Astrocyte of the cerebellum (primary cell): ENCODE measurements at regions of chr17 and their contacts with region 1.

Region 1: DNA sequence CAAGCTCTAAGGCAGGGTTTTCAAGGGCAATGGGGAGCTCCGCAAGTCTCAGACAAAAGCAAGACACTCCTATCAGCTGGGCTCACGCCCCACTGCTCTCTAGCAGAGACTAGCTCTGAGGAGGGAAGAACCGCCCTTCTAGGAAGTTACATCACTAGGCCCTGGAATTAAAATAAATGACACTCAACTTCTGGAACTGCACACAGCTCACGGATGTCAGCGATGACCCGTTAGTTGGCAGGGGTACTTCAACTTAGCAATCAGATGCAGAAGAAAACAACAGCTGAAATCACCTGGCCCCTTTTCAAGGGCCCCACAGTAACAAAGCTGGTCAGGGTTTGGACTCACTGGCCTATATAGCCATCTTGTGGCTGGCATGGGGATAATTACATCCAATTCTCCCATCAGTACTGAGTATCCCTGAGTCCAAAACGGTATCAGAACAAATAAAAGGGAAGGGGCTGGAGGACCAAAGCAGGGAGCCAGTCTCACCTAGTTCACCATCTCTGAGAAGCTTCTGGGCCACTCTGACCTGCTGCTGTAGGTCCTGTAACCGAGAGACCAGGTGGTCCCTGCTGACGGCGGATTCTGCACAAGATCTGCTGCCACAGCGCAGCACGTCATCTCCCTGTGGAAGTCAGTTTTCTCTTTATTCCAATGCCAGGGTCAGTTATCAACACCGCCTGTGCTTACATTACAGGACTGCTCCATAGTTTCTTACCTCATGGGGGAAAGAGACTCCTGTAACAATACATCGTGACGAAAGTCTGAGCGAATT is 22.2 kb downstream of the SERPINF1 start:
- DNase-seq: peak; percentile 84
- H3K4me3 ChIP-seq: no peak overlapping the region
- CTCF ChIP-seq: peak; percentile 78

Region 2: GRCh38 chr17:1649844-1650501 is 134.1 kb before region 1 on chr17 and contains the start of gene RILP:
- in situ Hi-C with region 1: loop called (anchors 10 kb)
- DNase-seq: no peak
- H3K4me3 ChIP-seq: peak within 1 kb of the TSS; percentile 49
- CTCF ChIP-seq: no peak

Region 3: DNA sequence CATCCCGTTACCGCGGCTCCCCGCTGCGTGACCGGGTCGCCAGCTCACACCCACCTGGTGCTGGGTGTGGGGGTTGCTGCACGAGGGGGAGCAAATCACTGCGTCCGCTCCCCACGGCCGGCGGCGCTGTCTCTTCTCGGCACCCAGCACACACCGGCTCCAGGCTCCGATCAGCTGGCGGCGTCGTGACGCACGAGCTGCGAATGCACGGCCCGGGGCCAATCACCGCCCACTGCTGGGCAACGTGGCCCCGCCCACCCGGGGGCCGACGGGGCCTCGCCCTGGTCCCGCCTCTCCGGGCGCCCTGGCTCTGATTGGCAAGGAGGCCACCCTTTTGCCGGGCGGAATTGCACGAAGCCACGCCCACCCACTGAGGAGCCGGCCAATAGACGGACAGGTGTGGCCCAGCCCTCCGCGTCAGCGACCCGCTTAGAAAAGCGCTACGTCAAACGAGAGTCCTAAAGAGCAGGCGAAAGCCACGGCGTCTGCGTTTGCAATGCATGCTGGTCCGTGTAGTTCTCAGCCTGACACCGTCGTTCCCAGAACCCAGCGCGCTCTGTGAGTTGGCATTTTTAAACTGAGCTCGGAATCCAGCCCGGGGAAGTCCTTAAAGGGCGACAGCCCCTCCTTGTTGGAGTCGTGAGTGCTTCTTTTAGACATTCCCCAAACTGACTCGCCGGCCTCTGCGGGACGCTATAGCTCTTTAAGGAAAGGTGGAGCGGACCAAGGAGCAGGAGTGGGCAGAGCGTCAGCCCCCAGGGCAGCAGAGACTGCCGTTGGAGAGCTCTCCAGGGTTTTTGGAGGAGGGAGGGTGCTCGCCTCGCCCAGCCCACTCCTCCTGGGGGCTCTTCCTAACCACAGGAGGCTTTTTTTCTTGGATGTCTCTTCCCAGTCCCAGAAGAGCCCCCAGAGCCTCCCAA is 67.7 kb before region 1 on chr17:
- in situ Hi-C with region 1: loop called (anchors 5 kb)
- DNase-seq: peak; percentile 100
- H3K4me3 ChIP-seq: peak overlapping the region; percentile 84
- CTCF ChIP-seq: peak; percentile 6

Region 4: DNA sequence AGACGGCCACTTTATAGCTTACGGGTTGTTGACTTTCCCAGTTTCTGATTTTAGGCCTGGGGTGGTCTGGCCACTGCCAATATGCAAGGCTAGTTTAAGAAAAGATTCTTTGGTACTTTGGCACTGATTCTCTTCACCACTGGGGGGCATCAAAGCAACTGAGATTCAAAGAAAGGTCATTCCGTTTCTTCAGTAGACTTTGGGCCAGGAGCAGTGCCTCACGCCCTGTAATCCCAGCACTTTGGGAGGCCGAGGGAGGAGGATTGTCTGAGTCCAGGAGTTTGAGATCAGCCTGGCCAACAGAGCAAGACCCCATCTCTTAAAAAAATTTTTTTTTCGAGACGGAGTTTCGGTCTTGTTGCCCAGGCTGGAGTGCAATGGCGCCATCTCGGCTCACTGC is 98.8 kb after region 1 on chr17:
- in situ Hi-C with region 1: loop called (anchors 5 kb)
- DNase-seq: no peak
- H3K4me3 ChIP-seq: no peak overlapping the region
- CTCF ChIP-seq: peak; percentile 61

Region 5: GRCh38 chr17:1999557-2000251 is 215.7 kb after region 1 on chr17:
- in situ Hi-C with region 1: loop called (anchors 10 kb)
- DNase-seq: no peak
- H3K4me3 ChIP-seq: no peak overlapping the region
- CTCF ChIP-seq: no peak